ENCODE measurements at regions of chr1 and their contacts with region 1.

Region 1: DNA sequence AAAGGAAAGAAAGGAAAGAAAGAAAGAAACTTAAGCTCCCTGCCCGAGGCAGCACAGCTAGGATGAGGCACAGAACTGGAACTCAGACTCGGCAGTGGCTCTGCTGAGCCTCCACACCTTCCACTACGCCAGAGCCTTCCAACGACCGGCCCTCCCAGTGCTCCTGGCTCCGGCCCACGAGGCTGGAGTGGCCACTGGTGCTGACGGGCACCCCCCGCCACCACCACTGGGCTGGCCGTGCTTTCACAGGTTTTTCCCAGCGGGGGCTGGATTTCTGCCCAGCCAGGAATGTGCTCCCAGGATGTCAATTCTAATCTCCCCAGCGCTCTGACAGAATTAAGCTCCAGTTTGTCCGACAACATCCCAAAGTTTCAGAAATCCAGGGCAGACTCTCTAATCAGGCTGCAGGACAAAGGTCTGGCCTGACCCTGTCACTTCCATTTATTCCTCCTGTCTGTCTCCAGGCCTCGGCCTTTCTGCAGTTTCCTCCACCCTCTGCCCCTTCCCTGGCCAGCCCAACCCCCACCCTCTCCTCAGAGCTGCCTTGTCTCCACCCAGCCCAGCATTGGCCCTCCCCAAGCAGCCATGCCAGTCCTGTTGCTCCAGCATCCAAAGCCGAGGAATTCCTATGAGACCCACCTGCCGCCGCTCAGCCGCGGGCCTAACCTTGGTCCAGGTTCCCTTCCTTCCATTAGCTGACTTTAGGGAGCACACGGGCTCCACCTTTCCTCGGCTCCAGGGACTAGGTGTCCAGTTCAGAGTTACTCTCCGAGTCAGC is 81.9 kb downstream of the CASZ1 start:
- DNase-seq: peak; percentile 64 to 88 (median 87)
- ATAC-seq: peak; percentile 71 to 77
- H3K4me3 ChIP-seq: no peak overlapping the region
- H3K27ac ChIP-seq: peak overlapping the region; percentile 92
- H3K4me1 ChIP-seq: peaks cover 15% of the 10 kb centered on the region
- H3K27me3 ChIP-seq: no peaks in the 10 kb centered on the region

Region 2: GRCh38 chr1:10733474-10734366 is 19.2 kb after region 1 on chr1:
- intact Hi-C with region 1: loop called in 1 of 4 experiments (anchors 2 kb)
- DNase-seq: peak in 1 of 3 donors; percentile 55
- ATAC-seq: peak; percentile 21 to 36
- H3K4me3 ChIP-seq: no peak overlapping the region
- H3K27ac ChIP-seq: peak overlapping the region; percentile 31
- H3K4me1 ChIP-seq: peaks cover 7% of the 10 kb centered on the region
- H3K27me3 ChIP-seq: no peaks in the 10 kb centered on the region